ENCODE measurements at regions of chr15 and their contacts with region 1.

Region 1: DNA sequence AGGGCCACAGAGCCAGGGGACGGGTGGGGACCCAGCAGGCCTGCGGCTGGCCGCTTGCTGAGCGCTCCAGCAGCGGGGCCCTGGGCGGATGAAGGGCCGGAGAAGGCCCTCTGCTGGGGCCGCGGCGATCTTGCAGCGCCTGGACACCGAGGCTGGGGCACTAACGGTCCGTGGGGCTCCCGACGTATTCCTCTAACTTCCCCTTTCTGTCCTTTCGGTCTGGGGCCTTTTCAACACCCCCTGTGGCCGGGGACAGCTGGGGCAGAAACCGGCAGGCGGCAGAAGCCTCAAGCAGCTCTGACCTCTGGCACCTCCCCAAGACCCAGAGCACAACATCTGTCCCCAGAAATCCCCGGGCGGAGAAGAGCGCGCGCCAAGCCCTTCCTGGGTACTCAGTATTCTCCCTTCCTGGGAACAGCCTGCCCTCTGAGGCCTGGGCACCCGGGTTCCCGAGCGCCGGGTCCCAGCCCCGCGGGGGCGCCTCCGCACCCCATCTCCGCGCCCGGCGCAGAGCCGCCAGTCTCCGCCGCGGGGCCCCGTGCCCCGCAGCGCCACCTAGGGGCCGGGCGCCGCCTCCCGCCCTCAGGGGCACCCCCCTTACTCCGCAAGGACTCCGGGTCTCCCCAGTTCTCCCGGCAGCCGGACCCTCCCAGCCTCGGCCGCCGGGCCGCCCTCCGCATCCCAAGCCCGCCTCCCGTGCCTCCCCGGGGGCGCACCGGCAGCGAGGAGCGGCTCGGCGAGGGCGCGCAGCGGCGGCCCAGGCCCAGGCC is 582 bp upstream of the SLCO3A1 start:
- H3K4me3 ChIP-seq: peak overlapping the region; percentile 63
- H3K27ac ChIP-seq: peak overlapping the region; percentile 79
- H3K4me1 ChIP-seq: peaks cover 41% of the 10 kb centered on the region
- CTCF ChIP-seq: peak; percentile 69

Region 2: DNA sequence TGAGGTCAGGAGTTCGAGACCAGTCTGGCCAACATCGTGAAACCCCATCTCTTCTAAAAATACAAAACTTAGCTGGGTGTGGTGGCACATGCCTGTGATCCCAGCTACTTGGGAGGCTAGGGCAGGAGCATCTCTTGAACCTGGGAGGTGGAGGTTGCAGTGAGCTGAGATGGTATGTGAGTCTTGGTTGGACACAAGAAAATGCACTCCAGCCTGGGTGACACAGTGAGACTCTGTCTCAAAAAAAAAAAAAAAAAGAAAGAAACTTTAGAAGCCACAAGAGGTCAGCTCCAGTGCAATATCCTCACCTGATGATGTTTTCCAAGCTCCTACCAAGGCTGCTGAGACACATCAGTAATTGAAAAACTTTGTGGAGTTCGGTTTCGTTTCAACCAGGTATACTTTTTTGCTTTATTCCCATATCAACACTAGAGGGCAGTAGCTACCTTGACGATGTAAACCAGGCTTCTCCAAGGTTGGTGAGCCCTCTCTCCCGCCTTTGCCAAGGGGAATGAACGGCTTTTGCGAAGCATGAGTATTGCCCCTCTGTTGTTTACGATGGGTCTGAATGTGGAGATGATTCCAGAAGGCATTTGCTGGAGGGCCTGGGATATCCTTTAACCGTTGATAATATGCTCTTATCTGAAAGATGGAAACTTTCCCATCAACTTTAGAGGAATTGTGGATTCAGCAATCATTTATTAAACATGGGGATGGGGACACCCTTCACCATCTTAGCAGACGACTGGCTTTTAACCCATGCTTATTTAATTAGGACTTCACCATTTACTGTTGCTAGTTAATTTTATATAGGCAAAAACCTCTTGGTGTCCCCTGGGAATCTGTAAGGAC is 550.1 kb before region 1 on chr15:
- CTCF ChIA-PET with region 1: interaction called, 15 read pairs
- POLR2A ChIA-PET with region 1: no interaction called
- H3K4me3 ChIP-seq: no peak overlapping the region
- H3K27ac ChIP-seq: no peak overlapping the region
- H3K4me1 ChIP-seq: no peaks in the 10 kb centered on the region
- CTCF ChIP-seq: peak; percentile 58

Region 3: DNA sequence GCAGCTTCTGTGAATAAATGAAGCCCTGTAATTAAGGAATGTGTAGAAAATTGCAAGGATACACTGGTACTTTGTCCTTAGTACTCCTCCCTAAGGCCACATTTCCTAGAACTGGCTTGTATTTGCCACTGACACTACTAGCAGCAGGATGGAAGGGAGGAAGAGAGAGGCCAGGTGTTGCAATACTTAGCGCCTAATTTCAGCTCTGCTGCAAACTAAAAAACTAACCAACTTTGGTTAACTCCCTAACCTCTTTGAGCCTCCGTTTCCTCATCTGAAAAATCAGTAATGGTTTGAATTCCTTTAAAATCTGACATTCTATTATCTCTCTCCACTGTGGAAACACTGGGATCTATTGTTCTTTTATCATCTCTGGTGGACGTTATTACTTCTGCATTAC is 495.9 kb before region 1 on chr15:
- CTCF ChIA-PET with region 1: interaction called, 11 read pairs
- POLR2A ChIA-PET with region 1: no interaction called
- H3K4me3 ChIP-seq: no peak overlapping the region
- H3K27ac ChIP-seq: no peak overlapping the region
- H3K4me1 ChIP-seq: no peaks in the 10 kb centered on the region
- CTCF ChIP-seq: no peak

Region 4: DNA sequence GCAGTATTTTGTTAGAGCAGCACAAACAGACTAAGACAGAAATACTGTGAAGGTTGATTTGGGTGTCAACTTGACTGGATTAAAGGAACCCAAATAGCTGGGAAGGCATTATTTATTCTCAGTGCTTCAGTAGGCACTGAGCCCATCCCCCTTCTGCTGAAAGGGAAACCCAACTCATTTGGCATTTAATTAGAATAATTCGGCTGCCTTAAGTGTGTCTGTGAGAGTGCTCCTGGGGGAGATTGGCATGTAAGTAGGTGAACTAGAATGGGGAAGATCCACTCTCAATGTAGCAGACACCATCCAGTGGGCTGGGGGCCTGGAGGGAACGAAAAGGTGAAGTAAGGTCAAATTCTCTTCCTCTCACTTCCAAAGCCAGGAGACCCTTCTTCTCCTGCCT is 19.9 kb before region 1 on chr15:
- CTCF ChIA-PET with region 1: interaction called, 13 read pairs
- POLR2A ChIA-PET with region 1: interaction called, 4 read pairs
- H3K4me3 ChIP-seq: no peak overlapping the region
- H3K27ac ChIP-seq: no peak overlapping the region
- H3K4me1 ChIP-seq: no peaks in the 10 kb centered on the region
- CTCF ChIP-seq: no peak

Measured in HEK293 (cell line).